RWPE1 (cell line): ENCODE measurements at regions of chr1 and their contacts with region 1.

Region 1: GRCh38 chr1:201361652-201362504 is 15.6 kb downstream of the TNNT2 start:
- DNase-seq: peak; percentile 95
- H3K27ac ChIP-seq: no peak overlapping the region
- CTCF ChIP-seq: peak; percentile 83

Region 2: GRCh38 chr1:201348211-201348566 is 13.7 kb before region 1 on chr1:
- CTCF ChIA-PET with region 1: interaction called, 132 read pairs
- POLR2A ChIA-PET with region 1: no interaction called
- DNase-seq: peak; percentile 91
- H3K27ac ChIP-seq: no peak overlapping the region
- CTCF ChIP-seq: peak; percentile 49

Region 3: GRCh38 chr1:201376464-201377374 is 14.8 kb after region 1 on chr1:
- CTCF ChIA-PET with region 1: interaction called, 14 read pairs
- POLR2A ChIA-PET with region 1: no interaction called
- DNase-seq: peak; percentile 88
- H3K27ac ChIP-seq: no peak overlapping the region; the same call in 1 of the 2 replicates
- CTCF ChIP-seq: no peak

Region 4: GRCh38 chr1:201513498-201514243 is 151.8 kb after region 1 on chr1:
- CTCF ChIA-PET with region 1: no interaction called
- POLR2A ChIA-PET with region 1: no interaction called
- DNase-seq: no peak
- H3K27ac ChIP-seq: no peak overlapping the region
- CTCF ChIP-seq: no peak